ENCODE measurements at regions of chr3 and their contacts with region 1.

Region 1: GRCh38 chr3:43883729-43884396 is 193.1 kb downstream of the ABHD5 start:
- DNase-seq: no peak
- ATAC-seq: peak; percentile 85

Region 2: GRCh38 chr3:43759297-43759782 is 124.5 kb before region 1 on chr3:
- intact Hi-C with region 1: no loop called
- DNase-seq: no peak
- ATAC-seq: peak; percentile 70

Region 3: DNA sequence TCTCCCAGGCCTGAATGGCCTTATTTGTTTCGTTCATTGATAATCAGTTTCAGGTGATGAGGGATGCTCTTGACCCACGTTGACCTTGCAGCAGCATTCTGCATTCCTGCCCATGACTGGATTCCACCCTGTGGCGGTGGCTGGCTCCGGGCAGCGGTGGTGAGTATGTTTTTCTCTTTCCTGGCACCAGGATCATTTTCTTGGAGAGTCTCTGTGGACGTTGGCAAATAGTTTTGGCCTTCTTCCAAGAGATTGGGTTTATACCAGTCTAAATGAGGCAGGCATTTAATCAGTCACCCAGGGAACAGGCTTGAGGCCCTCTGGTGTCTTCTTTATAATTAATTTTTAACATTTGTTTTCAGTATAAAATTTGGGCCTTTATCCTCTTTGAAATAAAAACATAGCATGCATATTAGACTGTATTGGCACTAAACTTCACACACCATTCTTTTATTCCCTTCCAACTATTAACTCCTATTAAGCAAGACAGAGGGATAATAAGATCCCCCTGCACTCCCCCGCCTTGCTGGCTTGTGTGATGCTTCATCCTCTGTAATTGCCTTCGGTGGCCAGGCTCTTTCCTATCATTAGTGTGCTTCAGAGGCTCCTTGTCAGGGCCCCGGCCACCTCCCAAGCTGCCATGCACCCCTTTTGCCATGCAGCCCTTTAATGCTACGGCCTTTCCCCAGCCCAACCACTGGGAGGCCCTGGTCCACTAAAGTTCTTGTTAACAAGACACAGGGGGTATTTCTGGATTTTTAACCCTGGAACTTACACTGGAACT is 181.6 kb after region 1 on chr3:
- intact Hi-C with region 1: loop called (anchors 10 kb)
- DNase-seq: no peak
- ATAC-seq: peak; percentile 77

Region 4: DNA sequence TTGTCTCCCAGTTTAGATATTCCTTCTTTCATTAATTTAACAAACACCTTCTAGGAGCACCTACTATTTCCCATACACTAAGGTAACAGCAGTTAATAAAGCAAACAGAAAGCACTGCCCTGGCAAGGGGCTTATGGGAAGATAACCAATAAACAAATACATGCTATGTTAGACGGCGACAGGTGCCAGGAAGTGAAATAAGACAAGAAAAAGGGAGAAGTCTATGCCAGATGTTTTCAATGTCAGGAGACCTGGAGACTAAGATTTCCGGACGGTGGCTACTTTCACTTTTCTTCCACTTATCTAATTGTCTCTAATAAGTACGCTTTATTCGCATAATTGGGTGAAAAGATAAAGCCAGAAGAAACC is 626.1 kb after region 1 on chr3:
- intact Hi-C with region 1: no loop called
- DNase-seq: no peak
- ATAC-seq: no peak

Measured in Right ventricle myocardium inferior (tissue), 1 donor.